ENCODE measurements at regions of chr1 and their contacts with region 1.

Region 1: DNA sequence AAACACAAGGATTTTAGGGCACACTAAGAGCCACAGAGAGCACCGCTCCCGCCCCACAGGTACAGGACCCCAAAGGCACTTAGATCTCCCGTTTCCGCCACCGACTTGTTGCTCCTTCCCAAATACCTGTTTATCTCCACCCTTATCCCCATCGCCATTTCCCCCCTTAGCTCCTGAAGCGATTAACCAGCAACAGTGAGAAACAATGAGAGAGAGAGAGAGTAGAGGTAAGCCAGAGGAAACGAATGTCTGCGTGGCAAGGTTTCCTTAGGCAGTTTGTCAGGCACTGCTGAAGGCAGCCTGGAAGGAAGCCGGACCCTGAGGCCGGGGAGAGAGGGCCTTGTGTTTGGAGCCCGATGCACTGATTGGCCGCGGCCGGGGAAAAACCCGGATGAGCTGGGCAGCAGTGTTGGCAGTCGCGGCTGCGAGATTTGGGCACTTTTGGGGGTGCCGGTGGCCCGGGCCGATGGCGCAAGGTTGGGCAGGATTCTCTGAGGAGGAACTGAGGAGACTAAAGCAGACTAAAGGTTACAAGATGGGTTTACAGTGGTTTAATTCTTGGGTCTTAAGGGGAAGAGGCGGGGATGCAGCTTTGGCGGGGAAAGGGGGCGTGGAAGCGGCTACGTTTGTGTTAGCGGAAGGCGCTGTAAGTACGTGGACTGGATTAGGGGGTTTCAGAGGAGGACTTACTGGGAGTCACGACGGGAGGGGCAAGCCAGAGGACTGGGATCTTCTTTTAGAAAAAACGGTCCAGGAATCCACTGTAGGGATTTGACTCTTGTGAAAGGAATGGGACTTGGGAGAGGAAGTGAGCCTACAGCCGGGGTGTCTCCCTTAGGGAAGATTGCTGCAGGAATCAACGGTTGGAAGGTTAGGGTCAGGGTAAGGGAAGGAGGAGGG is at the start of gene GORAB:
- DNase-seq: peak; percentile 90 to 93
- ATAC-seq: peak; percentile 97 to 99 (median 99)
- H3K4me3 ChIP-seq: peak within 1 kb of the TSS; percentile 41 to 83 (median 68)
- H3K27ac ChIP-seq: peak within 1 kb of the TSS; percentile 78 to 96 (median 94)
- H3K4me1 ChIP-seq: peaks cover 0 to 38% (median 28%) of the 10 kb centered on the region in 9 donors
- H3K27me3 ChIP-seq: no peaks in the 10 kb centered on the region
- CTCF ChIP-seq: no peak
- total RNA-seq, gene GORAB: 5.6 to 14.4 (median 9.4) TPM

Region 2: GRCh38 chr1:169933984-169934725 is 597.9 kb before region 1 on chr1:
- intact Hi-C with region 1: loop called in 1 of 10 experiments (anchors 10 kb)
- DNase-seq: no peak
- ATAC-seq: no peak
- H3K4me3 ChIP-seq: no peak overlapping the region
- H3K27ac ChIP-seq: no peak overlapping the region
- H3K4me1 ChIP-seq: peaks cover 0 to 13% (median 0%) of the 10 kb centered on the region in 9 donors
- H3K27me3 ChIP-seq: no peaks in the 10 kb centered on the region
- CTCF ChIP-seq: no peak

Region 3: GRCh38 chr1:170351366-170351946 is 180.6 kb before region 1 on chr1:
- intact Hi-C with region 1: loop called in 1 of 10 experiments (anchors 5 kb)
- DNase-seq: no peak
- ATAC-seq: peak in 4 of 8 donors; percentile 3 to 45 (median 24)
- H3K4me3 ChIP-seq: no peak overlapping the region
- H3K27ac ChIP-seq: peak overlapping the region in 6 of 10 donors; percentile 2 to 59 (median 31)
- H3K4me1 ChIP-seq: peaks cover 0 to 41% (median 22%) of the 10 kb centered on the region in 9 donors
- H3K27me3 ChIP-seq: no peaks in the 10 kb centered on the region
- CTCF ChIP-seq: no peak

Region 4: GRCh38 chr1:170410401-170411166 is 121.4 kb before region 1 on chr1:
- intact Hi-C with region 1: loop called in 3 of 10 experiments (anchors 10 kb)
- DNase-seq: no peak
- ATAC-seq: peak in 7 of 8 donors; percentile 73 to 94 (median 86)
- H3K4me3 ChIP-seq: no peak overlapping the region
- H3K27ac ChIP-seq: peak overlapping the region in 7 of 10 donors; percentile 53 to 80 (median 65)
- H3K4me1 ChIP-seq: peaks cover 0 to 40% (median 21%) of the 10 kb centered on the region in 9 donors
- H3K27me3 ChIP-seq: no peaks in the 10 kb centered on the region
- CTCF ChIP-seq: no peak